CD4-positive, alpha-beta T cell (primary cell): ENCODE measurements at regions of chr6 and their contacts with region 1.

Region 1: GRCh38 chr6:188821-189655 is 103.2 kb upstream of the DUSP22 start:
- DNase-seq: peak; percentile 58 to 84 (median 72)
- ATAC-seq: peak; percentile 86
- H3K4me3 ChIP-seq: no peak overlapping the region
- H3K4me3 Mint-ChIP-seq: no peak overlapping the region
- H3K27ac ChIP-seq: no peak overlapping the region
- H3K27ac Mint-ChIP-seq: peak overlapping the region; percentile 2
- H3K4me1 ChIP-seq: peaks cover 16% of the 10 kb centered on the region
- H3K4me1 Mint-ChIP-seq: peaks cover 35% of the 10 kb centered on the region
- H3K27me3 ChIP-seq: no peaks in the 10 kb centered on the region
- H3K27me3 Mint-ChIP-seq: no peaks in the 10 kb centered on the region
- CTCF ChIP-seq: peak; percentile 89

Region 2: GRCh38 chr6:220721-221475 is 31.9 kb after region 1 on chr6:
- CTCF ChIA-PET with region 1: interaction called, 13 read pairs
- POLR2A ChIA-PET with region 1: interaction called, 3 read pairs
- intact Hi-C with region 1: no loop called
- DNase-seq: no peak
- ATAC-seq: no peak
- H3K4me3 ChIP-seq: no peak overlapping the region
- H3K4me3 Mint-ChIP-seq: no peak overlapping the region
- H3K27ac ChIP-seq: no peak overlapping the region
- H3K27ac Mint-ChIP-seq: no peak overlapping the region
- H3K4me1 ChIP-seq: peaks cover 31% of the 10 kb centered on the region
- H3K4me1 Mint-ChIP-seq: peaks cover 31% of the 10 kb centered on the region
- H3K27me3 ChIP-seq: no peaks in the 10 kb centered on the region
- H3K27me3 Mint-ChIP-seq: no peaks in the 10 kb centered on the region
- CTCF ChIP-seq: no peak

Region 3: GRCh38 chr6:291697-292505 is 102.9 kb after region 1 on chr6 and contains the start of gene DUSP22:
- CTCF ChIA-PET with region 1: no interaction called
- POLR2A ChIA-PET with region 1: interaction called, 3 read pairs
- intact Hi-C with region 1: loop called (anchors 2 kb)
- DNase-seq: peak; percentile 48 to 91 (median 75)
- ATAC-seq: peak; percentile 67
- H3K4me3 ChIP-seq: peak within 1 kb of the TSS; percentile 65
- H3K4me3 Mint-ChIP-seq: peak within 1 kb of the TSS; percentile 97
- H3K27ac ChIP-seq: peak within 1 kb of the TSS; percentile 77 to 84
- H3K27ac Mint-ChIP-seq: peak within 1 kb of the TSS; percentile 95
- H3K4me1 ChIP-seq: peaks cover 30% of the 10 kb centered on the region
- H3K4me1 Mint-ChIP-seq: peaks cover 57% of the 10 kb centered on the region
- H3K27me3 ChIP-seq: no peaks in the 10 kb centered on the region
- H3K27me3 Mint-ChIP-seq: no peaks in the 10 kb centered on the region
- CTCF ChIP-seq: no peak
- total RNA-seq, gene DUSP22: 25.4 to 26.3 TPM

Region 4: DNA sequence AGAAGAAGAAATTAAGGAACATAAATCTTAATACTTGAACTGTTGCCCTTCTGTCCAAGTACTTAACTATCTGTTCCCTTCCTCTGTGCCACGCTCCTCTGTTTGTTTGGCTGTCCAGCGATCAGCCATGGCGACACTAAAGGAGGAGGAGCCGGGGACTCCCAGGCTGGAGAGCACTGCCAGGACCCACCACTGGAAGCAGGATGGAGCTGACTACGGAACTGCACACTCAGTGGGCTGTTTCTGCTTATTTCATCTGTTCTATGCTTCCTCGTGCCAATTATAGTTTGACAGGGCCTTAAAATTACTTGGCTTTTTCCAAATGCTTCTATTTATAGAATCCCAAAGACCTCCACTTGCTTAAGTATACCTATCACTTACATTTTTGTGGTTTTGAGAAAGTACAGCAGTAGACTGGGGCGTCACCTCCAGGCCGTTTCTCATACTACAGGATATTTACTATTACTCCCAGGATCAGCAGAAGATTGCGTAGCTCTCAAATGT is 219.6 kb after region 1 on chr6:
- CTCF ChIA-PET with region 1: interaction called, 4 read pairs
- POLR2A ChIA-PET with region 1: no interaction called
- intact Hi-C with region 1: loop called in 1 of 2 experiments (anchors 5 kb)
- DNase-seq: peak in 2 of 14 experiments; percentile 37 to 49
- ATAC-seq: no peak
- H3K4me3 ChIP-seq: no peak overlapping the region
- H3K4me3 Mint-ChIP-seq: peak overlapping the region; percentile 49
- H3K27ac ChIP-seq: no peak overlapping the region
- H3K27ac Mint-ChIP-seq: peak overlapping the region; percentile 66
- H3K4me1 ChIP-seq: peaks cover 15% of the 10 kb centered on the region
- H3K4me1 Mint-ChIP-seq: peaks cover 20% of the 10 kb centered on the region
- H3K27me3 ChIP-seq: no peaks in the 10 kb centered on the region
- H3K27me3 Mint-ChIP-seq: no peaks in the 10 kb centered on the region
- CTCF ChIP-seq: no peak

Region 5: GRCh38 chr6:1396952-1397868 is 1208.2 kb after region 1 on chr6:
- CTCF ChIA-PET with region 1: no interaction called
- POLR2A ChIA-PET with region 1: no interaction called
- intact Hi-C with region 1: loop called (anchors 5 kb)
- DNase-seq: peak; percentile 47 to 81 (median 63)
- ATAC-seq: peak; percentile 63
- H3K4me3 ChIP-seq: no peak overlapping the region
- H3K4me3 Mint-ChIP-seq: no peak overlapping the region
- H3K27ac ChIP-seq: no peak overlapping the region
- H3K27ac Mint-ChIP-seq: no peak overlapping the region
- H3K4me1 ChIP-seq: peaks cover 14% of the 10 kb centered on the region
- H3K4me1 Mint-ChIP-seq: peaks cover 12% of the 10 kb centered on the region
- H3K27me3 ChIP-seq: peaks cover 45 to 84% of the 10 kb centered on the region in 2 experiments
- H3K27me3 Mint-ChIP-seq: peaks cover 72% of the 10 kb centered on the region
- CTCF ChIP-seq: peak; percentile 96